Activated T-helper 1 cell treated with anti-CD3 and anti-CD28 coated beads, Interleukin-12 subunit alpha, Interleukin-12 subunit beta, Interleukin-2, Interleukin-4 antibody, amounts not matched to agents 30 ng/mL and 10 ng/mL and 1 ng/mL, durations not matched to agents 14 hours and 24 hours and 36 hours (primary cell): ENCODE measurements at regions of chr3 and their contacts with region 1.

Region 1: DNA sequence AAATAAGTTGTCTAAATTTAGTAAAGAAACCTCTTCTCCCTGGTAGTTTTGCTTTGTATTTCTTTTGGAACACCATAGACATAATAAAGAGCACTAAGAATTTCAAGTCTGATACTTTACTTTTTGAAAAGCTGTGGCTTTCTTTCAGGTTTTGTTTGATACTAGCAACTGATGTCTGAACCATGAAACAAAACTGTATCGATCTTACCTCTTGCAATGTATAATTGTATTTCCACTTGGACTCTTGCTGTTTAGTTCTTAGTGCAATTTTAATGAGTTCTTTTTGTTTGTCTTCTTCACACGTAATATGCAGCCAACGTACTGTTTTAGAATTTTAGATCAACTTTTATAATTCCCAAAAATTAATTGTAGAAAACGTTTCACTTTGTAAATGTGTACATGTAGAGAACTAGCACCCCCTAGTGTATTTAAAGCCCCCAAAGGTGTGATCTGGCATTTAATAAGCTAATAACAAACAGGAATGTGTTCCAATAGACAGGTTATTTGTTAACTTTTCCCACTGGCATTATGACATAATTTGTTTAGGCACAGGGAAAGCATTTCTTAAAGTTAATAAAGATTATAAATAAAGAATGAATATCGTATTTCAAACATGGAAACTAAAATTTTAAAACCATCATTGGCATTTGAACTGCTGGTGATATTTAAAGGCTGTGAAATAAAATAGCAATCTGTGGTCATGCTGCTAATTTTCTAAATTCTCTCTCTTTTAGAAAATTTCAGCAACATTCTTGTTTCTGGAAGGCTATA is 289.1 kb upstream of the DNAJC19 start:
- DNase-seq: no peak
- H3K4me3 Mint-ChIP-seq: no peak overlapping the region
- H3K27ac Mint-ChIP-seq: no peak overlapping the region
- H3K4me1 Mint-ChIP-seq: no peaks in the 10 kb centered on the region
- H3K27me3 Mint-ChIP-seq: no peaks in the 10 kb centered on the region

Region 2: GRCh38 chr3:181210275-181210674 is 68.4 kb before region 1 on chr3:
- intact Hi-C with region 1: loop called (anchors 2 kb)
- DNase-seq: no peak
- H3K4me3 Mint-ChIP-seq: no peak overlapping the region
- H3K27ac Mint-ChIP-seq: no peak overlapping the region
- H3K4me1 Mint-ChIP-seq: no peaks in the 10 kb centered on the region
- H3K27me3 Mint-ChIP-seq: no peaks in the 10 kb centered on the region

Region 3: DNA sequence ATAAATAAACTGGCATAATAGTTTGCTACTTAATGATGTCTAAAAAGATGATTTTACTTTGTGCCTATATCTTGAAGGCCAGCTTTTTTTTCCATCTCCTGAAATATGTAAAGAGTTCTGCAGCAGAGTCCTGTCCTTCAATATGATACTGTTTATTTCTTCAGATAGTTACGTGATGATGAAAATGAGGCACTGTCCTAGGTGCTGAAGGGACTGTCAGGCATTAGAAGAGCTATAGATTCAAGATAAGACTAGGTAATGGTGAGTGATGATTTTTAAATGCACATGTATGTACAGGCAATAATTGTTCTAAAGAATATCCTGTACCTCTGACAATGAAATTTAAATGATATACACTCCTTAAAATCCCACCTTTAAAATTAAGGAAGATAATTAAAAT is 37.8 kb after region 1 on chr3:
- intact Hi-C with region 1: no loop called
- DNase-seq: no peak
- H3K4me3 Mint-ChIP-seq: no peak overlapping the region
- H3K27ac Mint-ChIP-seq: no peak overlapping the region
- H3K4me1 Mint-ChIP-seq: no peaks in the 10 kb centered on the region
- H3K27me3 Mint-ChIP-seq: peaks cover 3% of the 10 kb centered on the region